Activated T-helper 1 cell treated with anti-CD3 and anti-CD28 coated beads, Interleukin-12 subunit alpha, Interleukin-12 subunit beta, Interleukin-2, Interleukin-4 antibody, amounts not matched to agents 30 ng/mL and 10 ng/mL and 1 ng/mL, durations not matched to agents 14 hours and 24 hours and 36 hours (primary cell): ENCODE measurements at regions of chr9 and their contacts with region 1.

Region 1: DNA sequence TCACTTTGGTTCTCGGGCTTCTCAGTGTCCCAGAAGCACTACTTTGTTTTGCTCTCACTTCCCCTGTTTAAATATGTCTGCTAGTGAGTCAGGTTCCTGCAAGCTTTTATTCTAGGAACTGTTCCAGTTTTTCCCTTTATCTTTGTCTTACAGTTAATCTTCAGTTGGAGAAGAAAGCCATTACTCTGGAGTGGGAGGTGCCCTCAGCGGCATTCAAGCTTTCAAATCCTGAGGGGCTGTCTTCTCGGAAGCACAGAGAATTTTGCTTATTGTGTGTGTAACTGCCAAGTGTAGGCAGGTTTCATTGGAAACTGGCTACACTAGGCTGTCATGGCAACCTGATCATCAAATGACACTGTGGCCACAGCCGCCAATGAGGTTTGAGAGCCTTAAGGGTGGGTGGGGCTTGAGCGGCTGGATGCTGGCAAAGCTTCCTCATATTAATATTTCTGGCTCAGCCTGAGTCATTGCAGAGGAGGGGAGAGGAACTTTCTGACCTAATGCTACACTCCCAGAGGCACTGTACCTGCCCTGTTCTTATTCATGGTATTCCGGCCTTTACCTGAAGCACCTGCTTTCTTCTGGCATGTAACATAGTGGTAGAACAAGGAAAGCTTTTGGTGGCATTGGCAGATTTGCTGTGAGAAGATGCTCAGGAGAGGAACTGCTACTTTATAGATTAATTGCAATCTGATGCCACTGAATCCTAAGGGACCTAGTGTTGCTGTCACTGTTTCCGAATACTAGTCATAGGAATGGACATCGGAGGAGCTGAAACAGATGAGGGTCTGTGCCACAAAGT is 26.3 kb downstream of the SLC25A25 start:
- DNase-seq: peak; percentile 79
- H3K4me3 Mint-ChIP-seq: peak overlapping the region; percentile 70
- H3K27ac Mint-ChIP-seq: peak overlapping the region; percentile 95
- H3K4me1 Mint-ChIP-seq: peaks cover 48% of the 10 kb centered on the region
- H3K27me3 Mint-ChIP-seq: no peaks in the 10 kb centered on the region

Region 2: DNA sequence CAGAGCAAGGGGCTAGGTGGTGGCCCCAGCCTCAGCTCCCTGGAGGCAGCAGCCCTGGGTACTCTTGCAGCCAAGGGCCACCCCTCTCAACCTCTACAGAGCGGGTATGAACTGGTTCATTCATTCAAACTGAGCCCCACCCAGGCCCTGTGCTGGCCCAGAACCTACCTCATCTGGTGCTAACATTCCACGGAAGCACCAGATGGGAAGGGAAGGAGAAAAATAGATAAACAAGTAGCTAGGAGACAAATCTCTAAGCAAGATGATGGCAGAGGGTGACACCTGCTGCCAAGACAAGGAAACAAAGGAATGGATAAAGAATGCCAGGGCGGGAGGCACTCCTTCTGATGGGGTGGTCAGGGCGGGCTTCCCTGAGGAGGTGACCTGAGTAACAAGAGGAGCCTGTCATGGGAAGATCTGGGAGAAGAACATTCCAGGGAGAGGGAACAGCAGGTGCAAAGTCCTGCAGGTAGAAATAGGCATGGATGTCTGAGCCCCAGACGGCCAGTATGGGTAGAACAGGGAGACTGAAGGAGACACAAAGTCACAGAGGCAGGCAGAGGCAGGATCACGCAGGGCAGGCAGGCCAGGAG is 183.7 kb before region 1 on chr9:
- intact Hi-C with region 1: no loop called
- DNase-seq: no peak
- H3K4me3 Mint-ChIP-seq: peak overlapping the region; percentile 43
- H3K27ac Mint-ChIP-seq: peak overlapping the region; percentile 95
- H3K4me1 Mint-ChIP-seq: peaks cover 41% of the 10 kb centered on the region
- H3K27me3 Mint-ChIP-seq: no peaks in the 10 kb centered on the region

Region 3: GRCh38 chr9:128034821-128035764 is 59.3 kb before region 1 on chr9:
- intact Hi-C with region 1: loop called (anchors 1 kb)
- DNase-seq: peak; percentile 62
- H3K4me3 Mint-ChIP-seq: no peak overlapping the region
- H3K27ac Mint-ChIP-seq: no peak overlapping the region
- H3K4me1 Mint-ChIP-seq: peaks cover 36% of the 10 kb centered on the region
- H3K27me3 Mint-ChIP-seq: peaks cover 9% of the 10 kb centered on the region

Region 4: GRCh38 chr9:128078504-128079434 is 15.6 kb before region 1 on chr9:
- intact Hi-C with region 1: loop called (anchors 2 kb)
- DNase-seq: no peak
- H3K4me3 Mint-ChIP-seq: peak overlapping the region; percentile 4
- H3K27ac Mint-ChIP-seq: peak overlapping the region; percentile 54
- H3K4me1 Mint-ChIP-seq: peaks cover 41% of the 10 kb centered on the region
- H3K27me3 Mint-ChIP-seq: no peaks in the 10 kb centered on the region

Region 5: GRCh38 chr9:128117613-128118471 is 23.5 kb after region 1 on chr9:
- intact Hi-C with region 1: loop called (anchors 1 kb)
- DNase-seq: peak; percentile 88
- H3K4me3 Mint-ChIP-seq: no peak overlapping the region
- H3K27ac Mint-ChIP-seq: peak overlapping the region; percentile 66
- H3K4me1 Mint-ChIP-seq: peaks cover 12% of the 10 kb centered on the region
- H3K27me3 Mint-ChIP-seq: no peaks in the 10 kb centered on the region

Region 6: GRCh38 chr9:128275996-128276573 is 181.7 kb after region 1 on chr9 and contains the starts of genes GOLGA2 and SWI5:
- intact Hi-C with region 1: no loop called
- DNase-seq: peak; percentile 100
- H3K4me3 Mint-ChIP-seq: peak within 1 kb of the TSS; percentile 98
- H3K27ac Mint-ChIP-seq: peak within 1 kb of the TSS; percentile 91
- H3K4me1 Mint-ChIP-seq: peaks cover 54% of the 10 kb centered on the region
- H3K27me3 Mint-ChIP-seq: no peaks in the 10 kb centered on the region
- total RNA-seq, gene GOLGA2: 52.3 and 53.0 TPM in 2 replicates
- total RNA-seq, gene SWI5: 10.4 and 13.3 TPM in 2 replicates